K562 (cell line): ENCODE measurements at regions of chr16 and their contacts with region 1.

Region 1: GRCh38 chr16:29926005-29926710 is at the start of gene KCTD13:
- DNase-seq: peak; percentile 87 to 99 (median 98)
- ATAC-seq: peak; percentile 97
- H3K4me3 ChIP-seq: peak within 1 kb of the TSS; percentile 91
- H3K27ac ChIP-seq: peak within 1 kb of the TSS; percentile 93
- H3K4me1 ChIP-seq: peaks cover 13 to 29% of the 10 kb centered on the region in 2 experiments; a peak in 4 of 5 replicates
- H3K27me3 ChIP-seq: no peaks in the 10 kb centered on the region
- CTCF ChIP-seq: no peak
- EP300 ChIP-seq: no peak
- POLR2A ChIP-seq: peak; percentile 93
- RAD21 ChIP-seq: no peak; a peak in 1 of 4 replicates
- polyA plus RNA-seq, gene KCTD13: 1.0 to 2.3 TPM

Region 2: DNA sequence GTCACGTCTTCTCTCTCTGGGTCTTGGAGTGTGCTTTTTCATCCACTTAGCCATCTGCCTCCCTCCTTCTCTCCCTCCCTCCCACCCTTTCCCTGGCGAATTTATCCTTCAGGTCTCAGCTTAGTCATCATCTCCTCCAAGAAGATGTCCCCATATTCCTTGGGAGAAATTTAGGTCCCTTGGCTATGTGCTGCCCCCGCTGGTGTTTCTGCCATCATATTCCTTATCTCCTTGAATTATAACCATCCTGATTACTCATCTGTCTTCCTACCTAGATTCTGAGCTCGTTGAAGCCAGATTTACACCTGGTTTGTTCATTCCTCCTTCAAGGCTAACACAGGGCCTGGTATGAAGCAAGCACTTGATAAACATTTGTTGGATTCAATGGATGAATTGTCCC is 31.8 kb before region 1 on chr16:
- CTCF ChIA-PET with region 1: no interaction called
- POLR2A ChIA-PET with region 1: no interaction called
- in situ Hi-C with region 1: no loop called
- intact Hi-C with region 1: no loop called
- DNase-seq: no peak
- ATAC-seq: no peak
- H3K4me3 ChIP-seq: no peak overlapping the region
- H3K27ac ChIP-seq: no peak overlapping the region
- H3K4me1 ChIP-seq: peaks cover 0 to 9% of the 10 kb centered on the region in 2 experiments; a peak in 3 of 5 replicates
- H3K27me3 ChIP-seq: peaks cover 9 to 24% of the 10 kb centered on the region in 2 experiments
- CTCF ChIP-seq: no peak
- EP300 ChIP-seq: no peak
- POLR2A ChIP-seq: no peak
- RAD21 ChIP-seq: no peak

Region 3: DNA sequence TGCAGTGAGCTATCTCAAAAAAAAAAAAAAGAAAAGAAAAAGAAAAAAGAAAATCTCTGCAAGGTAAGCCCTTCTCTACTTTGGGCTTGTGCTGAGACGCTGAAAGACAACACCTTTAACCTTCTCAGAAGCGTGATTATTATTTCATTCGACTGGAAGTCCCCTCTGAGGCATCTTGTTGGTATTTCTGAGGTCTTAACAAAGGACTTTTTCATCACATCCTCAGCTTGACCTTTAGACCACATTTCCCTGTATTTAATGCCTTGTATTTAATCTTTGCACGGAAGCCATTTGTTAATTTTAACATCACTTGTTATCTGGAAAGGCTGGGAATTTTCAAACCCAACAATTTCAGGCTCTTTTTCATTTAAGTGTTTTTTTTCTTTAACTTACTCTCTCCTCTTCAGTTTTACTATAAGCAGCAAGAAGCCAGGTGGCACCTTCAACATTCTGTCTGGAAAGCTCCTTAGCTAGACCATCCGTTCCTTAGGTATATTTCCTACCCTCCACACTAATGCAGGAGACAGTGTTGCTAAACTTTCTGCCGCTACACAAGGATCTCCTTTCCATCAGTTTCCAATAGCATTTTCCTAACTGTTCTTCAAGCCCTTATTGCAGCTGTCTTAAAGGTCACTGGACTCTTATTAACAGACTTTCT is 10.4 kb before region 1 on chr16:
- CTCF ChIA-PET with region 1: no interaction called
- POLR2A ChIA-PET with region 1: interaction called, 11 read pairs
- in situ Hi-C with region 1: no loop called
- intact Hi-C with region 1: no loop called
- DNase-seq: no peak
- ATAC-seq: no peak
- H3K4me3 ChIP-seq: no peak overlapping the region
- H3K27ac ChIP-seq: no peak overlapping the region
- H3K4me1 ChIP-seq: peaks cover 0 to 9% of the 10 kb centered on the region in 2 experiments; a peak in 2 of 5 replicates
- H3K27me3 ChIP-seq: no peaks in the 10 kb centered on the region
- CTCF ChIP-seq: no peak
- EP300 ChIP-seq: no peak
- POLR2A ChIP-seq: no peak
- RAD21 ChIP-seq: no peak

Region 4: GRCh38 chr16:29943846-29944669 is 17.9 kb after region 1 on chr16:
- CTCF ChIA-PET with region 1: no interaction called
- POLR2A ChIA-PET with region 1: interaction called, 17 read pairs
- in situ Hi-C with region 1: no loop called
- intact Hi-C with region 1: loop called (anchors 1 kb)
- DNase-seq: peak; percentile 62 to 83 (median 75)
- ATAC-seq: peak; percentile 89
- H3K4me3 ChIP-seq: peak overlapping the region; percentile 7; the same call in 1 of the 2 replicates
- H3K27ac ChIP-seq: peak overlapping the region; percentile 86
- H3K4me1 ChIP-seq: peaks cover 18 to 36% of the 10 kb centered on the region in 2 experiments
- H3K27me3 ChIP-seq: no peaks in the 10 kb centered on the region
- CTCF ChIP-seq: peak; percentile 59 to 73 (median 71)
- EP300 ChIP-seq: no peak
- POLR2A ChIP-seq: no peak
- RAD21 ChIP-seq: no peak

Region 5: DNA sequence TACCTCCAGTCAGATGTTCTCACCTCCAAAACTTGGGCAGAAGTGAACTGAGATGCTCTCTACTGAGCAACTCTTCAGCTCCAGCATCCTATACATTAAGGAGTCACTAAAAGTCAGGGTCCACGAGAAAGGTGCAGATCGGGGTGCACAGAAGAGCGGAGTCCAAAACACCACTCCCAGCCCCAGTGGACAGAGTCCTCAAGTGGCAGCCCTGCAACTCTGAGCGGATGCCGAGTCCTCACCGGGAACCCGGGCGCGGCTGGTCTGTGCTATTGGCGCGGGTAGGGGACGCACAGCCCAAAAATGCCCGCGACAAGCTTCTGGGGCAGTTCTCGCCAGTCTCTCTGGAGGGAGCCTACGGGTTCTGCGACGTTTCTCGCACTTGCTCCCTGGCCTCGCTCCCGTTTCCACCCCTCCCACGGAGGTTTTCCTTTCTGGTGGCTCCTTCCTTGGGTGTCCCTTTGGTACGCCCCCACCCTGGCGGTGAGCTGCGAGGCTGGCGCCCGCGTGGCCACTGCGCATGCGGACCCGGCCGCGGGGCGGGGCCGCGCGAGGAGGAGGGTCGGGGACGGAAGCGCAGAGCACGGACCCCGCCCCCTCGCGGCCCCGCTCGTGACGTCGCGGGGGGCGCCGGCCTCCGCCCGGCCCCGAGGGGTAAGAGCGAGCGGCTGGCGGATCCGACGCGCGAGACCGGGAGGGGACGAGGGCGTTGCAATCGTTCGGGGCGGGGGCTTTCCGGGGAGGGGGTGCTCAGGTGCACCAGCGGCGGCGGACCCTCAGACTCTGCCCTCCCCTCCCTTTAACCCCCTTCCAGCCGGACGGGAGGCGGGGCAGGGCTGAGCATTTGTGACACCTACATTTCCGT is 35.6 kb after region 1 on chr16 and contains the start of gene TMEM219:
- CTCF ChIA-PET with region 1: no interaction called
- POLR2A ChIA-PET with region 1: interaction called, 5 read pairs
- in situ Hi-C with region 1: no loop called
- intact Hi-C with region 1: loop called (anchors 5 kb)
- DNase-seq: peak; percentile 94 to 99 (median 98)
- ATAC-seq: peak; percentile 98
- H3K4me3 ChIP-seq: peak within 1 kb of the TSS; percentile 69
- H3K27ac ChIP-seq: peak within 1 kb of the TSS; percentile 85
- H3K4me1 ChIP-seq: peaks cover 12 to 20% of the 10 kb centered on the region in 2 experiments; a peak in 4 of 5 replicates
- H3K27me3 ChIP-seq: no peaks in the 10 kb centered on the region
- CTCF ChIP-seq: peak; percentile 16 to 39 (median 33); a peak in 4 of 6 replicates
- EP300 ChIP-seq: no peak
- POLR2A ChIP-seq: peak; percentile 78
- RAD21 ChIP-seq: peak in 1 of 2 experiments; percentile 20; a peak in 2 of 4 replicates
- polyA plus RNA-seq, gene TMEM219: 49.4 to 57.1 TPM

Region 6: GRCh38 chr16:29995911-29996772 is 70.0 kb after region 1 on chr16 and contains the start of gene INO80E:
- CTCF ChIA-PET with region 1: no interaction called
- POLR2A ChIA-PET with region 1: interaction called, 6 read pairs
- in situ Hi-C with region 1: no loop called
- intact Hi-C with region 1: loop called (anchors 5 kb)
- DNase-seq: peak; percentile 95 to 98 (median 97)
- ATAC-seq: peak; percentile 97
- H3K4me3 ChIP-seq: peak within 1 kb of the TSS; percentile 80
- H3K27ac ChIP-seq: peak within 1 kb of the TSS; percentile 100
- H3K4me1 ChIP-seq: peaks cover 16 to 54% of the 10 kb centered on the region in 2 experiments; a peak in 4 of 5 replicates
- H3K27me3 ChIP-seq: no peaks in the 10 kb centered on the region
- CTCF ChIP-seq: no peak
- EP300 ChIP-seq: no peak
- POLR2A ChIP-seq: peak; percentile 93
- RAD21 ChIP-seq: no peak
- polyA plus RNA-seq, gene INO80E: 0.31 to 0.56 TPM

Region 7: GRCh38 chr16:30096105-30096861 is 170.1 kb after region 1 on chr16 and contains the start of gene YPEL3:
- CTCF ChIA-PET with region 1: no interaction called
- POLR2A ChIA-PET with region 1: no interaction called
- in situ Hi-C with region 1: no loop called
- intact Hi-C with region 1: no loop called
- DNase-seq: peak; percentile 93 to 98 (median 98)
- ATAC-seq: peak; percentile 73
- H3K4me3 ChIP-seq: peak within 1 kb of the TSS; percentile 33
- H3K27ac ChIP-seq: peak within 1 kb of the TSS; percentile 88
- H3K4me1 ChIP-seq: peaks cover 28 to 51% of the 10 kb centered on the region in 2 experiments
- H3K27me3 ChIP-seq: no peaks in the 10 kb centered on the region
- CTCF ChIP-seq: no peak
- EP300 ChIP-seq: no peak
- POLR2A ChIP-seq: peak; percentile 71
- RAD21 ChIP-seq: no peak
- polyA plus RNA-seq, gene YPEL3: 0.41 to 0.42 TPM